ENCODE measurements at regions of chr18 and their contacts with region 1.

Region 1: GRCh38 chr18:50194631-50195532 is at the start of gene MYO5B:
- DNase-seq: peak; percentile 86
- H3K4me3 ChIP-seq: peak within 1 kb of the TSS; percentile 19 to 49; a peak in 3 of 4 replicates
- H3K27ac ChIP-seq: no peak within 1 kb of the TSS
- H3K4me1 ChIP-seq: no peaks in the 10 kb centered on the region; a peak in 1 of 4 replicates
- H3K27me3 ChIP-seq: peaks cover 46% of the 10 kb centered on the region
- CTCF ChIP-seq: peak; percentile 29; the same call in 1 of the 2 replicates
- EP300 ChIP-seq: no peak
- RAD21 ChIP-seq: no peak; the same call in 1 of the 2 replicates
- polyA plus RNA-seq, gene MYO5B: 1.2 and 1.3 TPM in 2 replicates

Region 2: GRCh38 chr18:50177294-50177992 is 17.4 kb before region 1 on chr18:
- CTCF ChIA-PET with region 1: interaction called, 13 read pairs
- POLR2A ChIA-PET with region 1: no interaction called
- DNase-seq: no peak
- H3K4me3 ChIP-seq: no peak overlapping the region
- H3K27ac ChIP-seq: no peak overlapping the region
- H3K4me1 ChIP-seq: peaks cover 0 to 5% of the 10 kb centered on the region in 2 experiments; a peak in 1 of 4 replicates
- H3K27me3 ChIP-seq: no peaks in the 10 kb centered on the region; the same call in 1 of the 2 replicates
- CTCF ChIP-seq: no peak
- EP300 ChIP-seq: no peak
- RAD21 ChIP-seq: no peak